WTC11 (cell line): ENCODE measurements at regions of chr20 and their contacts with region 1.

Region 1: GRCh38 chr20:44364068-44364467 is 8.6 kb downstream of the HNF4A start:
- DNase-seq: no peak
- ATAC-seq: no peak
- H3K4me3 Mint-ChIP-seq: no peak overlapping the region
- H3K27ac Mint-ChIP-seq: no peak overlapping the region
- H3K4me1 Mint-ChIP-seq: no peaks in the 10 kb centered on the region
- H3K27me3 Mint-ChIP-seq: no peaks in the 10 kb centered on the region; the same call in 1 of the 2 replicates
- CTCF ChIP-seq: no peak

Region 2: DNA sequence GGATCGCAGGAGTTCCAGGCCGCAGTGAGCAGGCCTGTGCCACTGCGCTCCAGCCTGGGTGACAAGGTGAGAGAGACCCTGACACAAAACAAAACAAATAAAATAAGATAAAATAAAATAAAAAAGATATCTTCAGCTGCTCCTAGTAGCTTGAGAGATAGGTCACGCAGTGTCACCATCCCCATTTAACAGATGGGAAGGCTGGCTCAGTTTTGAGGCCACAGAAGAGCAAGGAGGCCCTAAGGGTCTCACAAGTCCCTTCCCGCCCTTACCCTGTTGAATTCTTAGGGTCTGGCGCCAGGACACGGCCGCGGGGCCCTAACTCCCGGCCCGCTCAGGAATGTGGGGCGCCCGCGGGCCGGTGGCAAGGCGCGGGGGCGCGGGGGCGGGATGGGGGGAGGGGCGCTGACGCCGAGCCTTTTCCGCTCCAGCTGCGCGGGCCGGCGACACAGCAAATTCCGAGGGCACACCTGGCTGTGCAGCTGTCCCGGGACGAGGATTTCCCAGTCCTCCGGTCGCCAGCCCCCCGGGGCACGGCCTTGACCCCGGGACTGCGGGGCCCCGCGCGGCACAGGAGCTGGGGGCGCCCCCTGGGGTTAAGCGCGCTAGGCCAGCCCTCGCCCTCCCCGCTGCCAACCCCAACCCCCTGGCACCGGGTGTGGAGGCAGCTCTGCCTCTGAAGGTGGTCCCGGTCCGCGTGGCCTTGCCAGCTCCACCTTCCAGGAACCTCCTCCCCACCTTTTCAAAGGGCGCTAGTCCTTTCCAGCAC is 37.5 kb before region 1 on chr20:
- CTCF ChIA-PET with region 1: no interaction called
- POLR2A ChIA-PET with region 1: interaction called, 10 read pairs
- DNase-seq: peak; percentile 72
- ATAC-seq: peak; percentile 65
- H3K4me3 Mint-ChIP-seq: peak overlapping the region; percentile 38
- H3K27ac Mint-ChIP-seq: no peak overlapping the region
- H3K4me1 Mint-ChIP-seq: peaks cover 15% of the 10 kb centered on the region
- H3K27me3 Mint-ChIP-seq: no peaks in the 10 kb centered on the region
- CTCF ChIP-seq: no peak

Region 3: DNA sequence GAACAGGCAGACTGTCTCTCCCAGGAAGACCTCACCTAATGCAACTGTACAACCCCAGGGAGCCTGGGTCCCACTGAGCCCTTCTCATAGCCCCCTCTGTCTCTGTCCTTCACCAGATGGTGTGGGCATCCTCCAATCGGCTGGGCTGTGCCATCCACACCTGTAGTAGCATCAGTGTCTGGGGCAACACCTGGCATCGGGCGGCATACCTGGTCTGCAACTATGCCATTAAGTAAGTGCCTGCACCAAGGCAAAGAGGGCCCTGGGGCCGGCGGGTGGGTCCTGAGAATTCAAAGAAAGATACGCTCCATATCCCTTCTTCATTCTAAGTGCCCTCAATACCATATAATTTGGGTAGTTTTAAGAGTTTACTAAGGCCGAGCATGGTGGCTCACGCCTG is 18.9 kb before region 1 on chr20:
- CTCF ChIA-PET with region 1: no interaction called
- POLR2A ChIA-PET with region 1: no interaction called
- DNase-seq: no peak
- ATAC-seq: no peak
- H3K4me3 Mint-ChIP-seq: no peak overlapping the region
- H3K27ac Mint-ChIP-seq: no peak overlapping the region
- H3K4me1 Mint-ChIP-seq: no peaks in the 10 kb centered on the region
- H3K27me3 Mint-ChIP-seq: no peaks in the 10 kb centered on the region
- CTCF ChIP-seq: no peak